ENCODE measurements at regions of chr15 and their contacts with region 1.

Region 1: DNA sequence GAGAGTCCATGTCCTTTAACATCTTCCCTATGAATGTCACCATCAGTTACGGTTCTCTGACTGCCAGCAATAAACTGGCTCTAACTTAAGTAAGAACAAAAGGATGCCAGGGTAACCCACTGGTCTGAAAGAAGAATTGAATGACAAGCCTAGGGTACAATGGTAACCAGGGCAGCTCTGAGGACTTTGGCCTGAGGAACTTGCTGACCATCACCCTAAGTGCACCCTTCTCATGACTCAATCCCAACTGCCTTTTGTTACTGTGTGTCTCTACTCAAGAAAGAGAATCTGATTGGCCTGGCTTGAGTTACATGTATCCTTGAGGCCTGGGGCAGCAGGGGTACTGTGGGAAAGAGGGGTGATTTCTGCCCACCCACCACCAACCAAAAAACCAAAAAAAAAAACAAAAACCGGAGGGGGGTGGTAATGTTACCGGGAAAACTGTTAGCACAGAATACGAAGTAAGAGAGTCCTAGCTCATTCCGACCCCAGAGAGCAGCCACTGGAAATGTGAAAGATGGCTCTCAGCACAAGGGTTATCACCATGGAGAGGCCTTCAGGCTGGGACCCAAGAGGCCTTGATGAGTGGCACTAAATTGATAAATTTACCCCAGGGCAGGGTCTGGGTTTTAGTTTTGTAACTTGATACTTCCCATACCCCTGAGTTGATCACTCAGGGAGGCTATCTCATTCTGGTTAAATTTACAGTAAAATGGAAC is 9.3 kb upstream of the SLC28A1 start:
- DNase-seq: no peak
- H3K4me3 ChIP-seq: no peak overlapping the region
- H3K4me3 Mint-ChIP-seq: no peak overlapping the region
- H3K27ac ChIP-seq: no peak overlapping the region
- H3K27ac Mint-ChIP-seq: no peak overlapping the region
- H3K4me1 ChIP-seq: peaks cover under 1% of the 10 kb centered on the region in 2 donors
- H3K4me1 Mint-ChIP-seq: peaks cover 7% of the 10 kb centered on the region
- H3K27me3 ChIP-seq: no peaks in the 10 kb centered on the region
- H3K27me3 Mint-ChIP-seq: peaks cover 1% of the 10 kb centered on the region in 3 donors
- CTCF ChIP-seq: no peak

Region 2: DNA sequence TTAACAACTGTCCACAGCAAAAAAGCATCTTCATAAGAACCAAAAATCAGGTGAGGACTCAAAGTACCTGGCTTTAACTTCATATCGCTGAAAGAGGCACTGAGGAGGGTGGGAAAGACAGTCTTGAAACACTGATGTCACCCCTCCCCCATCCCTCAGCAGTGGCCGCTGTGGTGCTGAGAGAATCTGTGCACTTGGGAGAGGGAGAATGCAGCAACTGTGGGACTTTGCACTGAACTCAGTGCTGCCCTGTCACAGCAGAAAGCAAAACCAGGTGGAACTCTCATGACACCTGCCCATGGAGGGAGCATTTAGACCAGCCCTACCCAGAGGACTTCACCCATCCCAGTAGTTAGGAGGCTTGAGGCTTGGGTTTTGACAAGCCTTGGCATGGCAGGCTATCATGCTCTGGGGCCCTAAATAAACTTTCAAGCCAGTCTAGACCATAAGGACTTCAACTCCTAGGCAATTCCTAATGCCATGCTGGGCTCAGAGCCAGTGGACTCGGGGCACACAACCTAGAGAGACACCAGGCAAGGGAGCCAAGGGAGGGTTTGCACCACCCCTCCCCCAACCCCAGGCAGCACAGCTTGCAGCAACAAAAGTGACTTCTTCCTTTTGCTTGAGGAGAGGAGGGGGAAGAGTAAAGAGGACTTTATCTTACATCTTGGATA is 280.4 kb before region 1 on chr15:
- intact Hi-C with region 1: loop called in 1 of 2 experiments (anchors 5 kb)
- DNase-seq: no peak
- H3K4me3 ChIP-seq: peak overlapping the region in 1 of 3 experiments; percentile 37
- H3K4me3 Mint-ChIP-seq: peak overlapping the region in 1 of 2 donors; percentile 64
- H3K27ac ChIP-seq: peak overlapping the region in 1 of 2 donors; percentile 75
- H3K27ac Mint-ChIP-seq: peak overlapping the region in 6 of 7 donors; percentile 51 to 83 (median 66)
- H3K4me1 ChIP-seq: peaks cover 49 to 54% of the 10 kb centered on the region in 2 donors
- H3K4me1 Mint-ChIP-seq: peaks cover 54% of the 10 kb centered on the region
- H3K27me3 ChIP-seq: no peaks in the 10 kb centered on the region
- H3K27me3 Mint-ChIP-seq: no peaks in the 10 kb centered on the region
- CTCF ChIP-seq: no peak

Measured in CD14-positive monocyte (primary cell).